ENCODE measurements at regions of chr7 and their contacts with region 1.

Region 1: GRCh38 chr7:36165059-36165458 is 12.0 kb downstream of the EEPD1 start:
- DNase-seq: peak; percentile 96
- ATAC-seq: peak; percentile 99
- H3K4me3 ChIP-seq: no peak overlapping the region
- H3K27ac ChIP-seq: peak overlapping the region; percentile 62
- H3K4me1 ChIP-seq: peaks cover 60% of the 10 kb centered on the region
- H3K27me3 ChIP-seq: no peaks in the 10 kb centered on the region
- CTCF ChIP-seq: no peak
- EP300 ChIP-seq: peak in 1 of 2 experiments; percentile 72; a peak in 2 of 4 replicates
- POLR2A ChIP-seq: no peak
- RAD21 ChIP-seq: no peak

Region 2: DNA sequence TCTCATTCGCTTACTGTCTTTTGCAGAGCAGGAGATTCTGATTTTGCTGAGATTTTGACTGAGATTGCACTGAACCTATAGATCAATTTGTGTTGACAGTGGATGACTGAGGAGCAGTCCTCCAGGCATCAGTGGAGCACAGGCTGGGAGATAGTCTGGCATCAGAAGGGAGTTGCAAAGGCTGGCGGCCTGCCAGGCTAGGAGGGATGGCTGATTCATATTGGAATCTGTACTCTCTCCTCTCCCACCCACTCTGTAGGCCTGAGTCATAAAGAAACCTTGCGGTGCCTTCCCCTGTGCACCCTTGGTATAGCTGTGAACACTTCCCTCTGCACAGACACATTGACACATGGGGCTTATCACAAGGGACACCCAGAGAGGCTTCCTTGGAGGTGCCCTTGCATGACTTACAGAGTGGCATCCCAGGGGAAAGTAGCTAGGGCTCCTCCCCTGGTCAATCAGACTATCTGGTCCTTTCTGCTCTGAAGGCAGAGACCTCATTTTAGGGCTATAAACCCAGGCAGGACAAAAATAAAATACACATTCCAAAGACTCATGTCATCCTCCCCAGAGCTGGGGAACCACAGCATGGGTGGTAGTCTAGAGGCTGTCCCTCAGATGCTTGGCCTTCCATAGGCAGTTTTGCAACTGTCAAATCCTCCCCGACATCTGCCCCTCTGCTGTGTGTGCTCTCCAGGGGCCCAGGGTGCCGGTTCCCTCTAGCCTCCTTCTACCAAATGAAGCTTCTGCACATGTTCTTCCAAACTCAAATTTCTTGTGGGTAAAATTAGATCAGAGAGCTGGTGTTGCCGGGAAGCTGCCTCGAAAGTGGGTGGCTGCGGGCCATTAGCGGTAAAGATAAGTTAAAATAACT is 49.4 kb before region 1 on chr7:
- CTCF ChIA-PET with region 1: no interaction called
- POLR2A ChIA-PET with region 1: no interaction called
- in situ Hi-C with region 1: no loop called
- intact Hi-C with region 1: loop called (anchors 2 kb)
- DNase-seq: peak; percentile 82
- ATAC-seq: peak; percentile 86
- H3K4me3 ChIP-seq: no peak overlapping the region
- H3K27ac ChIP-seq: no peak overlapping the region
- H3K4me1 ChIP-seq: peaks cover 57% of the 10 kb centered on the region
- H3K27me3 ChIP-seq: no peaks in the 10 kb centered on the region
- CTCF ChIP-seq: no peak
- EP300 ChIP-seq: no peak
- POLR2A ChIP-seq: no peak
- RAD21 ChIP-seq: no peak

Region 3: DNA sequence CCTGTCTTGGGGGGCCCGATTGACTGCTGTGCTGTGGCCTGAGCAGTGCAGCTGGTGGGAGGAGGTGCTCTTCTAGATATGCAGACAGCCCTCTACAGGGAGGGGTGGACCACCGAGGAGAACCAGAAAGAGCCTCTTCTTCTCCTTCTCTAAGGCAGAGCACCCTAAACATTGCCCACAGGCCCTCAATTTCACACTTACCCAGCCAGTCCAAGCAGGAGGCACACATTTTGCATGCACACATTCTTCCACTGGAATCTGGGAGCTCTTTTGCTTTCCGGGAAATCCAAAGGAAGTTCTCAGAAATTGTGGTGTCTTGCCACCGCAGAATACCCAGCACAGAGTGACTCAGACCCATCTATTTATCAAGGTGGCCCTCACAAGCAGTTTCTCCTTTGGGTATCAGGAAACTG is 33.8 kb after region 1 on chr7:
- CTCF ChIA-PET with region 1: no interaction called
- POLR2A ChIA-PET with region 1: no interaction called
- in situ Hi-C with region 1: no loop called
- intact Hi-C with region 1: no loop called
- DNase-seq: no peak
- ATAC-seq: no peak
- H3K4me3 ChIP-seq: no peak overlapping the region
- H3K27ac ChIP-seq: no peak overlapping the region
- H3K4me1 ChIP-seq: peaks cover 43% of the 10 kb centered on the region
- H3K27me3 ChIP-seq: no peaks in the 10 kb centered on the region
- CTCF ChIP-seq: no peak
- EP300 ChIP-seq: no peak
- POLR2A ChIP-seq: no peak
- RAD21 ChIP-seq: no peak